ENCODE measurements at regions of chr10 and their contacts with region 1.

Region 1: DNA sequence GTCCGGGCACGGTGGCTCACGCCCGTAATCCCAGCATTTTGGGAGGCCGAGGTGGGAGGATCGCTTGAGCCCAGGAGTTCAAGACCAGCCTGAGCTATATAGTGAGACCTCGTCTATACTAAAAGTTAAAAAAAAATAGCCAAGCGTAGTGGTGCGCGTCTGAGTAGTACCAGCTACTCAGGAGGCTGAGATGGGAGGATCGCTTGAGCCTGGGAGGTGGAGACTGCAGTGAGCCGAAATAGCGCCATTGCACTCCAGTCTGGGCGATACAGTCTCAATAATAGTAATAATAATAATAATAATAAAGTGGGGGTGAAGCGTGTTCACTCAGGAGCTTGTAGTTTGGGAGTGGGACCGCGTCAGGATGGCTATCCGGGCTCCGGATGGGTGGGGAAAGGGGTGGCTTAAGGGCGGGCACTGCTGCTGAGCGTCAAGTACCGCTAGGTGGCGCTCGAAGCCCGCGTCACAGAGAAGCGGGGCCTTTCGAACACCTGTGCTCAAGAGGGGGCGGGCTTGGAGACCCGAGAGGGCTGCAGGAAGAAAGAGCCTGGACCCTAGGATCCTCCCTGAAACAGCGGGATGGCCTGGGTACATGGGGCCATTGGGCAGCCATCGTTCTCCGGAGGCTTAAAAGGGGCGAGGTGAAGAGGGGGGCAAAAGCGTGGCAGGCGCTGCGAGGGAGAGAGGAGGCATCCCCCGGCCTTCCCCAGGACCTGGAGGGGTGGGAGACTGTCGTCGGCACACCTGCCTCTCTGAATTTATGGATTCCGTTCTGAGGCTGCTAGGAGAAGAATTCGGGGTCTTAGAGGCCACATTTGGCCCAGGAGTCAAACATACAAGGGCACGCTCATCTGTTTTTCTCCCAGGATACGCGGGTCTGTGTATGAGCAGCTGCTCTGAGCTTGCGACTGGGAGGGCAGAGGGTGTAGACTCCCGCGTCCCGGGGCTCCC is 14.5 kb downstream of the LBX1 start:
- DNase-seq: peak; percentile 80
- H3K4me3 Mint-ChIP-seq: peak overlapping the region; percentile 33
- H3K27ac Mint-ChIP-seq: peak overlapping the region; percentile 1
- H3K4me1 Mint-ChIP-seq: peaks cover 35% of the 10 kb centered on the region
- H3K27me3 Mint-ChIP-seq: peaks cover 100% of the 10 kb centered on the region

Region 2: GRCh38 chr10:101161494-101162299 is 53.0 kb before region 1 on chr10:
- CTCF ChIA-PET with region 1: interaction called, 12 read pairs
- DNase-seq: peak; percentile 78
- H3K4me3 Mint-ChIP-seq: no peak overlapping the region
- H3K27ac Mint-ChIP-seq: peak overlapping the region; percentile 64
- H3K4me1 Mint-ChIP-seq: peaks cover 8% of the 10 kb centered on the region
- H3K27me3 Mint-ChIP-seq: peaks cover 72% of the 10 kb centered on the region

Region 3: DNA sequence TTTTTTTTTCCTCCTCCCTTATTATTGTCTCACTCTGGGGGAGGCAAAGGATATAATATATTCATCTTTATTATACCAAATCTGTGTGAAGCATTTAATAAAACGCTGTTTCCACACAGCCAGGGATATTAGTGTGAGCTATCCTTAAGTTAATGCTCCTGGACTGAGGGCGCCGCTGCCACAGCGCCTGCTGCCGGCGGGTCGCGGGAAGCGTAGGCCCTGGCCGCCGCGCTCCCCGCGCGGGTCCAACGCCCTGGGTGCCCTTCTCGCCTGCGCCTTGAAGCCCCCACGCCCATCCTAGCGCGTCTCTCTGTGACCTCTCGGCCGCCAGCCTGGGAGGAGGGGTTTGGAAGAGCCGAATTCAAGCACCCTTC is 24.0 kb after region 1 on chr10:
- CTCF ChIA-PET with region 1: interaction called, 29 read pairs
- DNase-seq: peak; percentile 40
- H3K4me3 Mint-ChIP-seq: no peak overlapping the region
- H3K27ac Mint-ChIP-seq: no peak overlapping the region
- H3K4me1 Mint-ChIP-seq: peaks cover 7% of the 10 kb centered on the region
- H3K27me3 Mint-ChIP-seq: peaks cover 99% of the 10 kb centered on the region

Region 4: DNA sequence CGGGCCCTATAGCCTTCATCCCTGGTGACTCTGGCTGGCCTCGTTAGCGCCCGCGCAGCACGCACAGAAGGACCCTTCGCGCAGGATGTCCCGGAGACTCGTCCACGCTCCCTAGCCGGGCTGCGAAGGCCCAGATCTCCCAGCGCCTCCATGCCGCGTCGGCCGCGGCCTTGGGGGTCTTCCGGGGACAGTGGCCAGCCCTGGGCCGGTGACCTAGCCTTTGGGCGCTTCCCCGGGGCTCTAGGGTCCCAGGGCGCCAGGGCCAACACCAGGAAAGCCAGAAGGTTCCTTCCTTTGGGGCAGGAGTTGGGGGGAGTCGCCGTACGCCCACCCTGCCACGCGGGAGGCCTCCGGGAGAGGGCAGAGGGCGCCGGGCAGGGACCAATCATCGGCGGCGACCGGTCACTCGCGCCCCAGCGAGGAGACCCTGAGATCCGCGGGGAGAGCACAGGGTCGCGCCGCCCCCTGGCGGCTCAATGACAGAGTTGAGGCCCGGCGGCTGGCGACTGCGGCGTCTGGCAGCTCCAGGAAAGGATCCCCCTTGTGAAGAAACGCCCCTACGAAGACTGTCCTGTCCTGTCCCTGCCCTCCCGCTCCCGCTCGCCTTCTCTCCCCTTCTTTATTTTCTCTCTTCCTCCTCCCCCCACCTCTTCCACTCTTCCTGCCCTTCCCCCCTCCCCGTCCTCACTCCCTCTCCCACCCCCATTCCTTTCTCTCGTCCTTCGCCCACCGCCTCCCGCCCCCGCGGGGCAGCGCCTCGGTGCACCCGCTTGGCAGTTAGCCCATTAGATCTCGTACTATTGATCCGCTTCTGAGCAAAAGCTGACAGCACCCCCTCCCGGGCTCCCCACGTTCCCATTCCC is 76.8 kb after region 1 on chr10:
- CTCF ChIA-PET with region 1: interaction called, 26 read pairs
- DNase-seq: peak; percentile 57
- H3K4me3 Mint-ChIP-seq: peak overlapping the region; percentile 50
- H3K27ac Mint-ChIP-seq: no peak overlapping the region
- H3K4me1 Mint-ChIP-seq: peaks cover 4% of the 10 kb centered on the region
- H3K27me3 Mint-ChIP-seq: peaks cover 100% of the 10 kb centered on the region

Measured in activated naive CD4-positive, alpha-beta T cell treated with anti-CD3 and anti-CD28 coated beads, Interleukin-2, amount 10 ng/mL, durations not matched to agents 7 days and 5 days (primary cell).